Calu3 (cell line): ENCODE measurements at regions of chr2 and their contacts with region 1.

Region 1: DNA sequence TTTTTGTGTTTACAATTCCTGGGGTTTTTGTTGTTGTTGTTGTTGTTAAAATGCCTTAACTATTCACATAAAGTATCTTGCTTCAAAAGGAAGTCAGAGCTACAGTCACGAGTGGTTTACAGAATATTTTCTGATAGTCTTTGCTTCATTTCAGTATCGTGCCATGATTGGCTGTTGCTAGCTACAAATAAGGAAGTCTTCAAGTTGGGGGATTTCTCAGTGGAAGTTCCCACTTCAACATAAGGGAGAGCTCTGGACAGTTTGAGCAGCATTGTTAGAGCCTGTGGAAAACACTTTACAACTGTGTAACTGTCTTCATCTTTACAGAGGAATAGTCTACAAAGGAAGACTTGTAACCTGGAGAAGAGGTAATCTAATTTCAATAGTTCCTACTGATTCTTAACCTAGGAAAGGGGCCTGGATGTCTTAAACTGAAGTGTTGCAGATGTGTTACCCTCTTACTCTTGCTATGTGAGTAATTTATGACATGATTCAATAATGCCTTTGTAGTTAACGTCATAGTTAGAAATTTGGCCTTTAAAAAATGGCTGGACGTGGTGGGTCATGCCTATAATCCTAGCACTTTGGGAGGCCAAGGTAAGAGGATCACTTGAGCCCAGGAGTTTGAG is 23.4 kb upstream of the TANK start:
- DNase-seq: peak; percentile 26
- H3K4me3 Mint-ChIP-seq: peak overlapping the region; percentile 72
- H3K27ac Mint-ChIP-seq: peak overlapping the region; percentile 89
- H3K4me1 Mint-ChIP-seq: peaks cover 56% of the 10 kb centered on the region
- H3K27me3 Mint-ChIP-seq: no peaks in the 10 kb centered on the region
- CTCF ChIP-seq: no peak

Region 2: DNA sequence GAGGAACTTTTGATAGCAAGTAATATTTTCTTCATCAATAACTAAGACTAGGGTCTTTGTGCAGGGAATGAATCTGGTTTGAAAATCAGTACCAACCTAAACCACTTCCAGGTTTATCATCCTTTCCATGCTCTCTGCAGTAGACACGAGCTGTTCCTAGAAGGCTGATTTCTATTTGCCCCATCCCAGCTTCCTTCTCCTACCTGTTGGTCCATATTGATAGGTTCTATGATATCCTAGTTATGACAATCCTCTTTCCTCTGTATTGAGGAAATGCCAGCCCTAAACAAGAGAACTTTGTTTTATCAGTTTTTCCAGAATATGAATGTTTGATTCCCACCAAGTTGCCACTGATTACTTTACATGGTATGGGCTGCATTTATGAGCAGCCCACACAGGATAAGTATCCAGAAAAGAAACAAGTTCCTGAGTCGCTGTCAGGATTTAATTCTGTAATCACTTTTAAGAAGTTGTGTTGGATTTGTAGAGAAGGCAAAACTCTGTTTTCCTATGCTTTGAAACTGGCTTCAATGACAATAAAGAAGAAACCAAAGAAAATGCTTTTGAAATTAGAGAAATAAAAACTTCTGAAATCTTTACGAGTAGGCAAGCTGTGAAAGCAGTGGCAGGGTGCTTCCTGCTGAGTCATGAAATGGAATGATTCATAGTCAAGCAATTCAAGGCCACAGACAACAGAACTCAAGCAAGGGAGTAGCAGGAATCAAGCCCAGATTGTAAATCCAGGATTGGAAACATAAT is 13.9 kb before region 1 on chr2:
- CTCF ChIA-PET with region 1: interaction called, 7 read pairs
- intact Hi-C with region 1: loop called (anchors 2 kb)
- DNase-seq: peak; percentile 50
- H3K4me3 Mint-ChIP-seq: peak overlapping the region; percentile 61
- H3K27ac Mint-ChIP-seq: peak overlapping the region; percentile 90
- H3K4me1 Mint-ChIP-seq: peaks cover 50% of the 10 kb centered on the region
- H3K27me3 Mint-ChIP-seq: no peaks in the 10 kb centered on the region
- CTCF ChIP-seq: no peak

Region 3: DNA sequence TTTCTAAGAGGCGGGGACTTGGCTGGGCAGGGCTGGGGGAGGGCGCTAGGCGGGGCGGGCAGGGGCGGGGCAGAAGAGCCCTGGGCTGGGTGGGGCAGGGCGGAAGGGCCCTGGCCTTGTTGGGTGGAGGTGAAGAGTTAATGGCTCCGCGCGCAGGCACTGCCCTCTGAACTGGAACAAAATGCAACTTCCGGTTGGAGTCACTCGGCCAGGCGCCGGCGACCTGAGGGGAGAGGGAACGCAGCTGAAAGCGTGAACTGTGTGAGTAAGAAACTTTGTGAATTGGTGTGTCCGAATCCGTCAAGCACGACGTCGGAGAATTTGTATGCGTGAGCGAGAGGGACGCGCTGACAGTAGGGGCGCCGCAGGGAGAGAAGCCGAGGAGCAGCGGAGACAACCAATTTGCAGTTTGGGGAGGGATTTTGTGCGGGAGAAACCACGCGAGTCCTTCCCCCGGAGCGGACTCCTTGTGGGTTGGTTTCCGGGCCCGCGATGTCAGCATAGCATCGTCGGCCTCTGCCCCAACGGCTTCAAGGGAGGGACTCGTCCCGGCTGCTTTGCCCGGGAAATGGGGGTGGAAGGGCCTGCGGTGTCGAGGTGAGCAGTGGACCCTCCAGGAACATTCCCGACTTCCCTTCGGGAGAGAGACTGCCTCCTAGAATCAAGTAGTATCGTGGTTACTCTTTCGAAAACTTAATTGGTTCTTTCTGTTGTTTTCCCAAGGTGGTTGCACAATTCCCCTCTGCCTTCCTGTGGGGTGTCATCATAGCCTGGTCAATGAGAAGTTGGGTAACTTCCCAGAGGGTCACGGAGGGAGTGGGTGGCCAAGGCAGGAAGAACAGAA is 23.6 kb after region 1 on chr2 and contains the start of gene TANK:
- CTCF ChIA-PET with region 1: no interaction called
- intact Hi-C with region 1: loop called (anchors 2 kb)
- DNase-seq: peak; percentile 87
- H3K4me3 Mint-ChIP-seq: peak within 1 kb of the TSS; percentile 90
- H3K27ac Mint-ChIP-seq: peak within 1 kb of the TSS; percentile 95
- H3K4me1 Mint-ChIP-seq: peaks cover 18% of the 10 kb centered on the region
- H3K27me3 Mint-ChIP-seq: no peaks in the 10 kb centered on the region
- CTCF ChIP-seq: no peak
- total RNA-seq, gene TANK: 81.3 and 85.4 TPM in 2 replicates

Region 4: DNA sequence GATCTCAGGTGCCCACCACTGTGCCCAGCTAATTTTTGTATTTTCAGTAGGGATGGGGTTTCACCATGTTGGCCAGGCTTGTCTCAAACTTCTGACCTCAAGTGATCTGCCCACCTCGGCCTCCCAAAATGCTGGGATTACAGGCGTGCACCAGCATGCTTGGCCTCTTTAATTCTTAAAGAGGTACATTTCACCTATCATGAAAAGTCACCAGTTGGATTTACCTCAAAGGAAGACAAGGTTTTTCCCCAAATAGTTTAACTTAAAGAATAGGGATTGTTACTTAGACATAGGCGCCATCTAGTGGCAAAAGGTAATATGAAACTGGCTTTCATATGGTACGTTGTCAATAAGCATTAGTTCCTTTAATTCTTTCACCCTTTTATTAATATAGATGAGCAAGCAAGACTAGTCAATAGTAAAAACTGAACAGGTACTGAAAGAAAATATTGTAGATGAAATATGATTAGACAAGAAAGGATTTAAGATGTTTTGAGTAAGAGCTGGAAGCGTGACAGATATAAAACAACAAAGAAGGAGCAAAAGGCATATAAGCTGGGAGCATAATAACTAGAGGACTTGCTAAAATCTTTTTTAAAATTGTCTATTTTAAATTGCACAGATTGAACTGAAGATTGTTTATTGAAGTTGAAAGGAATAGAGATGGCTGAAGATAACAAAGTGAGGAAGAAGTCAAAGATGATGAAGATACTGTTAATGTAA is 136.4 kb after region 1 on chr2:
- CTCF ChIA-PET with region 1: no interaction called
- intact Hi-C with region 1: no loop called
- DNase-seq: peak; percentile 40
- H3K4me3 Mint-ChIP-seq: no peak overlapping the region
- H3K27ac Mint-ChIP-seq: no peak overlapping the region
- H3K4me1 Mint-ChIP-seq: no peaks in the 10 kb centered on the region
- H3K27me3 Mint-ChIP-seq: no peaks in the 10 kb centered on the region
- CTCF ChIP-seq: peak; percentile 56